ENCODE measurements at regions of chr20 and their contacts with region 1.

Region 1: DNA sequence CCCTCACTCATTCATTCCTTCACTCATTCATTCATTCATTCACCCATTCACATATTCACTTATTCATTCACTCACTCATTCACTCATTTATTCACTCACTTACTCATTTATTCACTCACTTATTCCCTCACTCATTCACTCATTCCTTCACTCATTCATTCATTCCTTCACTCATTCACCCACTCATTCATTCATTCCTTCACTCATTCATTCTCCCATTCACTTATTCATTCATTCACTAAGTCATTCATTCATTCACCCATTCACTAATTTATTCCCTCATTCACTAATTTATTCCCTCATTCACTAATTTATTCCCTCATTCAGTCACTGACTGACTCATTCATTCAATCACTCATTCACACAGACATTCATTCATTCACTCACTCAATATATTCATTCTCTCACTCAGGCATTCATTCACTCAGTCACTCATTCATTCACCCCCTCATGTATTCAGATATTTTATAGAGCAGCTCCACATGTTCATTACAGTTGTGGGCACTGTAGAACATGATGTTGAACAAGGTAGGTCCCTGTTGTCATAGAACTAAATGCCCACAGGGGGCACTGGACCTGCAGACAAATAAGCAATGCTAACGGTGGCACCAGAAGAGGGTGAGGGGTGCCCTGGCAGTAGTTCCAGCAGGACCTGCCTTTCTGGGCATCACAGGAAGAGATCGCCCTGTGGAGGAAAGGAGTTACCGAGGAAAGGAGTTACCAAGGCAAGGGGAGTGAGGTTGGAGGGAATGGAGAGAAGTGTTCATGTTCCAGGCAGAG is 127.8 kb downstream of the EDN3 start:
- DNase-seq: no peak
- ATAC-seq: no peak
- H3K4me3 ChIP-seq: no peak overlapping the region
- H3K27ac ChIP-seq: no peak overlapping the region
- H3K4me1 ChIP-seq: no peaks in the 10 kb centered on the region
- H3K27me3 ChIP-seq: peaks cover 0 to 8% (median 0%) of the 10 kb centered on the region in 3 donors
- CTCF ChIP-seq: no peak
- POLR2A ChIP-seq: no peak

Region 2: DNA sequence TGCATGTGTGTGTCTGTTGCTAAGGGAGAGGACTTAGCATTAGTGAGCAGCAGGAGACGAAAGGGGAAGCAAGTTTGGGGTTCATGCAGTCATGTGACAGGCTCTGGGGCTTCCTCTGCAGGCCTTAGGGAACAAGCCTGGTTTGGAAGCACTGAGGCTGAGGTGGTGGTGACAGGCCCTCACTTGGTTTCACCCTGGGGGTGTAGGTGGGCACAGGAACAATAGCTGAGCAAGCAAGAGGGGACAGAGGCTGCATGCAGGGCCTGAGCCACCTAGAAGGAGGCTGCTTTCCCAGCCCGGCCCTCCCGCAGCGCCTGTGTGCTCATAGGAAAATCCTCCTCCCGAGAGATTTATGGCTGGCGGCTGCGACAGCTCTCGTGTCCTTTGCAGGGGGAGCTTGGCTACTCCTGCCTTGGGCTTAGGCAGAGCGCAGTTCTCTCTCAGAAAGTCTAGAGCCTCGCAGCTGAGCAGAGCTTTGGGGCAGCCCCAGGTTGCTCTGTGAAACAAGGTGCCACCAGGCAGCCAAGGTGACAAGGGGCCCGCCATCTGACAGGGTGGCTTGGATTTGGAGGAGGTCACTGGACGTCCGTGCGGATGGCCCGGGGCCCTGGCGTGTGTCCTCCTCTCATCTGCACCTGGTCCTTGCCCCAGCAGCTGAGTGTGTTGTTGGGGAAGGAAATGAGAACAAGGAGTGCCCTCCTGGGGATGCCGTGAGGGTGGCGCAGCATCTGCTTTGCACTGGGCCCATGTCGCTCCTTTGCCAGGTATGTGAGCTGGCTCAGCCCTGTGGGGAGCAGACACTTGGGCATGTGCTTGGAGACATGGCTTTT is 86.2 kb before region 1 on chr20:
- in situ Hi-C with region 1: loop called in 1 of 4 experiments (anchors 25 kb)
- intact Hi-C with region 1: no loop called
- DNase-seq: no peak
- ATAC-seq: peak in 1 of 2 donors; percentile 37
- H3K4me3 ChIP-seq: peak overlapping the region in 1 of 4 donors; percentile 15
- H3K27ac ChIP-seq: no peak overlapping the region
- H3K4me1 ChIP-seq: no peaks in the 10 kb centered on the region
- H3K27me3 ChIP-seq: no peaks in the 10 kb centered on the region
- CTCF ChIP-seq: no peak
- POLR2A ChIP-seq: no peak

Measured in gastrocnemius medialis (tissue), 4 donors.